Astrocyte of the cerebellum (primary cell): ENCODE measurements at regions of chr12 and their contacts with region 1.

Region 1: DNA sequence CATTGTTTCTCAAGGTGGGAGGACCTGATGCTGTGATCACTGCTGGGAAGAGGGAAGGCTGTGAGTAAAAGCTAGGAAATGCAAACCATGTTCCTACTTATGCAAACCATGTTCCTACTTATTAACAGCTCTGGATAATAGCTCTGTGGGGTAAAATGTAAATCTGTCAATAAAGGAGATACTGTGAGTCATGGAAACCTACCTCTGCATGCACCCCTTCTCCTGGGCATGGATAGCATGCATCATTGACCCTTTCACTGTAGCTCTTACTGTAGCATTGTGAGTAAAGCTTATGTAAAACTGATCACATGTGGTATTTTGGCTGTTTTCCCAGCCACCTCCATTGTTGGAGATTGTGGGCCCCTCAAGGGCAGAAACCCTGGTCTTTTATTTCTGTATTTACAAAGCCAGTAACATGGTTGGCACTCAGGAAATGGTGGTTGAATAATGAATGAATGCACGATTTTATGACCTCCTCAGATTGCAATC is 253.7 kb downstream of the GRIN2B start:
- DNase-seq: peak; percentile 22
- H3K4me3 ChIP-seq: no peak overlapping the region
- CTCF ChIP-seq: no peak

Region 2: DNA sequence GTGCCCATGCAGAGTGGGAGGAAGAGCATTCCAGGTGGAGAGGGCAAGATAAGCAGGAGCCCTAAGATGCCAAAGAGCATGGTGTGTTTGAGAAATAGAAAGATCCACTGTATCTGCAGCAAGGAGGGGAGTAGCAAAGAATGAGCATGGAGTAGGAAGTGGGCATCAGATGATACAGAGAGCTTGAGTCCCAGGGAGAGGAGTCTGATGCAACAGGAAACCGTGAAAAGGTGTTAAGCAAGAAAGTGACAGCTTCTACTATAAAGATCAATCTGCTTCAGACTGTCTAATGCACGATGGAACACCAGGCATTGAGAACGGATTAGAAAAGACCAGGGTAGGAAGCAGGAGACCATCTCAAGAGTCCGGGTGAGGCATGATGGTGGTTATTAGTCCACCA is 763.5 kb before region 1 on chr12:
- in situ Hi-C with region 1: no loop called
- DNase-seq: no peak
- H3K4me3 ChIP-seq: no peak overlapping the region
- CTCF ChIP-seq: no peak

Region 3: GRCh38 chr12:13788626-13789025 is 60.9 kb after region 1 on chr12:
- in situ Hi-C with region 1: loop called (anchors 5 kb)
- DNase-seq: no peak
- H3K4me3 ChIP-seq: no peak overlapping the region
- CTCF ChIP-seq: no peak